Naive thymus-derived CD4-positive, alpha-beta T cell (primary cell): ENCODE measurements at regions of chr9 and their contacts with region 1.

Region 1: GRCh38 chr9:76576344-76576743 is 117.4 kb downstream of the GCNT1 start:
- DNase-seq: peak in 1 of 9 donors; percentile 59
- ATAC-seq: peak; percentile 87
- H3K4me3 ChIP-seq: no peak overlapping the region
- H3K4me3 Mint-ChIP-seq: peak overlapping the region in 1 of 10 donors; percentile 36
- H3K27ac ChIP-seq: no peak overlapping the region
- H3K27ac Mint-ChIP-seq: peak overlapping the region in 1 of 9 donors; percentile 73
- H3K4me1 ChIP-seq: no peaks in the 10 kb centered on the region
- H3K4me1 Mint-ChIP-seq: peaks cover 6 to 36% (median 12%) of the 10 kb centered on the region in 7 donors
- H3K27me3 ChIP-seq: peaks cover 0 to 11% of the 10 kb centered on the region in 2 donors
- H3K27me3 Mint-ChIP-seq: peaks cover 10 to 45% (median 32%) of the 10 kb centered on the region in 5 donors

Region 2: DNA sequence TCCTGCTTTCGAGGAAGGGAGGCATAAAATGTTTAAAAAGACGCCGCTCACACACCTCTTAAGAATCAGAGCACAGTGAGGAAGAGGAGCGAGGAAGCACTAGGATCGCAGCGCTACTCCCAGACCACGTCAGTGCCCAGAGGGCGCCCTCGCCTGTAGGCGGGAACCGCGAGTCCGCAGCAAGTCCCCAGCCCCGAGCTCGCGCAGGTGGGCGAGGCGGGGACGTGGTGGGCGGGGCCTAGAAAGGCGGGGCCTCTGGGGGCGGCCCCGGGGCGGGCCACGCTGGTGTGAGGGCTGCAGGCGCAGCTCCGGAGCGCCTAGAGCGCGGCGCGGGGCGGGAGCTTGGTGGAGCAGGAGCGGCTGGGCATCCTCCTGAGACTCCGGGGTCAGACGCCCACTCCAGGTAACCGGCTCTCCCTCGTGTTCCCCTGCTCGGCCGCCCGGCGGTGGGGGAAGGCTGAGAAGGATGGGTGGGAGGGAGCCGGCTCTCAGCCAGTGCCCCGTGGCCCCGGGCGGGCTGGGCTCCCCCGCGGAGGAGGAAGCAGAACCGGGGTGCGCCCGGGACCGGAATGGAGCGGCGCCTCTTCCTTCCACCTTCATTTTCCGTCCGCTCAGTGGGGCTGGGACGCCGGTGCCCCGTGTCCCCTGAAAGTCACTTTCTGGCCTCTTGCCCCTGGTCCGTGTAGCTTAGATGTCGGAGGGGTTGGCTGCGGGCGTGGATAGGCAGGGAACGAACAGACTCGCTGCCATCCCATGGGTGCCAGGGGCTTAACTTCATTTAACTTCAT is 117.2 kb before region 1 on chr9 and contains the start of gene GCNT1:
- CTCF ChIA-PET with region 1: no interaction called
- POLR2A ChIA-PET with region 1: no interaction called
- intact Hi-C with region 1: loop called in 1 of 2 experiments (anchors 5 kb)
- DNase-seq: peak; percentile 78 to 98 (median 86)
- ATAC-seq: peak; percentile 98
- H3K4me3 ChIP-seq: peak within 1 kb of the TSS; percentile 92
- H3K4me3 Mint-ChIP-seq: peak within 1 kb of the TSS; percentile 81 to 96 (median 92)
- H3K27ac ChIP-seq: no peak within 1 kb of the TSS
- H3K27ac Mint-ChIP-seq: peak within 1 kb of the TSS in 8 of 9 donors; percentile 7 to 81 (median 61)
- H3K4me1 ChIP-seq: peaks cover 3 to 11% of the 10 kb centered on the region in 2 donors
- H3K4me1 Mint-ChIP-seq: peaks cover 16 to 34% (median 20%) of the 10 kb centered on the region in 7 donors
- H3K27me3 ChIP-seq: no peaks in the 10 kb centered on the region
- H3K27me3 Mint-ChIP-seq: peaks cover 0 to 3% (median 0%) of the 10 kb centered on the region in 5 donors
- total RNA-seq, gene GCNT1: 1.4 to 8.9 (median 1.7) TPM

Region 3: GRCh38 chr9:76530458-76531110 is 45.8 kb before region 1 on chr9:
- CTCF ChIA-PET with region 1: no interaction called
- POLR2A ChIA-PET with region 1: no interaction called
- intact Hi-C with region 1: loop called in 1 of 2 experiments (anchors 5 kb)
- DNase-seq: no peak
- ATAC-seq: no peak
- H3K4me3 ChIP-seq: no peak overlapping the region
- H3K4me3 Mint-ChIP-seq: peak overlapping the region in 2 of 10 donors; percentile 17 to 27
- H3K27ac ChIP-seq: no peak overlapping the region
- H3K27ac Mint-ChIP-seq: peak overlapping the region in 1 of 9 donors; percentile 23
- H3K4me1 ChIP-seq: no peaks in the 10 kb centered on the region
- H3K4me1 Mint-ChIP-seq: peaks cover 0 to 13% (median 0%) of the 10 kb centered on the region in 7 donors
- H3K27me3 ChIP-seq: no peaks in the 10 kb centered on the region
- H3K27me3 Mint-ChIP-seq: peaks cover 0 to 12% (median 0%) of the 10 kb centered on the region in 5 donors

Region 4: DNA sequence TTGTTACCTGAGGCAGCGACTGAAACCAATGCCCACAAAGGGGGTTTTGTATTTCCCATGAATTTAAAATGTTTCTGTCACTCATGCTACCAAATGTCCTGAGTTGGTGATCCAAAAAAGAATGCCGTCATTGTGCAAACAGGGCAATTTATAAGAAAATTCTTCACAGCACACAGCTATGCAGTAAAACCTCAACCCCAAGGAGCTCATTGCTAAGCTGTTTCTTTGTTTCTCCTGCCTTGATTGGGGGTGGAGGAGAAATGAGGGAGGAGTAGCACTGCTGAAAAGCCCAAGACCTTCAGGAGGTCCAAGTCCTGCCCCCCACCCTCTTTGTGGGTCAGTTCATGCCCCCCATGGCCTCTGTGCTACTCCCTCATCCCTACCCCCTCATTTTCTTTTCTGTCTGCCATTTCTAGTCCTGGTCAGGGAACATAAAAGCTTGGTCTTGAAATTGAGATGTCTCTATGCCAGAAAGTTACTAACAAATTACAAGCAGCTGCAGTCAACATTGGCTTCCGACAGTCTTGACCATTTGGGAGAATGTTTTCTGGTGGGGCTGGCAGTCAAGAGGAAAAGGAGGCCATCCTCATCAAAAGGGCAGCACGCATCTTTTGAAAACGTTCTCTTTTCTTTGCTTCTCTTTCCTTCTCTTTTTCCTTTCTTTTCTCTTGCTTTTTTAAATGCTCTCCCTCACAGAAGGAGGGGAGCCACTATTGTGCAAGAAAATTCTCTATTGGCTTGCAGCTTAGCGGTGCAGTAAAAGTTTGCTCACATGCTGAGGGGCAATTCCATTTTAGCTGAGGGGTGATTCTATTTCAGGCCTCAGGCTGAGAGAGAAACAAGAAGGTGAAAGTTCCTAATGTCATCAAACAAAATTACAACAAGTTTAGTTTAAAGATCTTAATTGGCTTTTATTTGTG is 16.0 kb after region 1 on chr9:
- CTCF ChIA-PET with region 1: no interaction called
- POLR2A ChIA-PET with region 1: no interaction called
- intact Hi-C with region 1: no loop called
- DNase-seq: no peak
- ATAC-seq: no peak
- H3K4me3 ChIP-seq: no peak overlapping the region
- H3K4me3 Mint-ChIP-seq: peak overlapping the region in 1 of 10 donors; percentile 44
- H3K27ac ChIP-seq: no peak overlapping the region
- H3K27ac Mint-ChIP-seq: no peak overlapping the region
- H3K4me1 ChIP-seq: no peaks in the 10 kb centered on the region
- H3K4me1 Mint-ChIP-seq: peaks cover 0 to 18% (median 0%) of the 10 kb centered on the region in 7 donors
- H3K27me3 ChIP-seq: no peaks in the 10 kb centered on the region
- H3K27me3 Mint-ChIP-seq: peaks cover 0 to 25% (median 12%) of the 10 kb centered on the region in 5 donors

Region 5: GRCh38 chr9:76651119-76651705 is 74.9 kb after region 1 on chr9:
- CTCF ChIA-PET with region 1: no interaction called
- POLR2A ChIA-PET with region 1: no interaction called
- intact Hi-C with region 1: loop called in 1 of 2 experiments (anchors 5 kb)
- DNase-seq: peak in 2 of 9 donors; percentile 14 to 27
- ATAC-seq: peak; percentile 66
- H3K4me3 ChIP-seq: peak overlapping the region; percentile 56
- H3K4me3 Mint-ChIP-seq: peak overlapping the region; percentile 58 to 88 (median 80)
- H3K27ac ChIP-seq: peak overlapping the region; percentile 48
- H3K27ac Mint-ChIP-seq: peak overlapping the region; percentile 8 to 85 (median 69)
- H3K4me1 ChIP-seq: peaks cover 8 to 11% of the 10 kb centered on the region in 2 donors
- H3K4me1 Mint-ChIP-seq: peaks cover 17 to 46% (median 30%) of the 10 kb centered on the region in 7 donors
- H3K27me3 ChIP-seq: no peaks in the 10 kb centered on the region
- H3K27me3 Mint-ChIP-seq: peaks cover 0 to 4% (median 0%) of the 10 kb centered on the region in 5 donors

Region 6: GRCh38 chr9:76827286-76828080 is 251.1 kb after region 1 on chr9:
- CTCF ChIA-PET with region 1: no interaction called
- POLR2A ChIA-PET with region 1: no interaction called
- intact Hi-C with region 1: no loop called
- DNase-seq: no peak
- ATAC-seq: no peak
- H3K4me3 ChIP-seq: no peak overlapping the region
- H3K4me3 Mint-ChIP-seq: no peak overlapping the region
- H3K27ac ChIP-seq: no peak overlapping the region
- H3K27ac Mint-ChIP-seq: no peak overlapping the region
- H3K4me1 ChIP-seq: no peaks in the 10 kb centered on the region
- H3K4me1 Mint-ChIP-seq: no peaks in the 10 kb centered on the region
- H3K27me3 ChIP-seq: no peaks in the 10 kb centered on the region
- H3K27me3 Mint-ChIP-seq: peaks cover 0 to 19% (median 14%) of the 10 kb centered on the region in 5 donors